OCI-LY7 (cell line): ENCODE measurements at regions of chr11 and their contacts with region 1.

Region 1: DNA sequence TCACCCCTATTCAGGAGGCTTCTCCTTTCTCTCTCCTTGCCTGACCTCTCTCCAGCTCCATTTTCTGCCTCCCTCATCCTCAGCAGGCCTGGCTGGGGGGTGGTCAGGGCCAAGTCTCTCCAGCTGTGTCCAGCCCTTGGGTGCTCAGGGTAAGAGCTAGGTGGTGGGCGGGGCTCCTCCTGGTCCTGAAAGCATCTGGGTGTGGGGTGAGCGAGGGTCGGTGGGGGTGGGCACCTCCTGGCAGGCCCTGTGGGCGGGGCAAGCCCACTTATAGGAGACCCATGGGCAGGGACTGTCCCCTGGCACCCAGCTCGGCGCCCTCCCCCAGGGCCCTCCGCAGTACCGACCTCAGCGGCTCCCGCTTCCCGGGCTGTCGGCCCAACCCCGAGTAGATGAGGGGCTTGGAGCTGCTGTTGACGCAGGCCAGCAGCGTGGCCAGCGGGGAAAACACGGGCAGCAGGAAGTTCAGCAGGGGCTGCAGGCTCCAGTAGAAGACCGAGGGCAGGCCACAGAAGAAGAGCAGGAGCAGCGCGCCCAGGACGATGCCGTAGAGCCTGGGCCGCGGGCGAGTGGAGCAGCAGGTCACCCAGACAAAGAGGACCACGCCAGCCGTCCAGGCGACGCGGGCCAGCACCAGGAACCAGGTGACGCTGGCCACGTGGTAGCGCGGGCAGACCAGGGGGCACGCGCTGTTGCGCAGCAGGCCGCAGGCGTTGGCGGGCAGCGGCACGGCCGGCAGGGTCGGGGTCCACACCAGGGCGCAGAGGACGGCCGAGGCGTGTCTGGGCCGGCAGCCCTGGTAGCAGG is 734 bp downstream of the MRGPRG start:
- DNase-seq: no peak
- H3K4me3 ChIP-seq: no peak overlapping the region
- H3K27ac ChIP-seq: no peak overlapping the region
- H3K4me1 ChIP-seq: no peaks in the 10 kb centered on the region
- CTCF ChIP-seq: no peak

Region 2: GRCh38 chr11:2892215-2893020 is 325.5 kb before region 1 on chr11:
- CTCF ChIA-PET with region 1: no interaction called
- POLR2A ChIA-PET with region 1: no interaction called
- intact Hi-C with region 1: no loop called
- DNase-seq: peak; percentile 71
- H3K4me3 ChIP-seq: peak overlapping the region; percentile 41
- H3K27ac ChIP-seq: peak overlapping the region; percentile 20
- H3K4me1 ChIP-seq: peaks cover 22% of the 10 kb centered on the region
- CTCF ChIP-seq: peak; percentile 87

Region 3: DNA sequence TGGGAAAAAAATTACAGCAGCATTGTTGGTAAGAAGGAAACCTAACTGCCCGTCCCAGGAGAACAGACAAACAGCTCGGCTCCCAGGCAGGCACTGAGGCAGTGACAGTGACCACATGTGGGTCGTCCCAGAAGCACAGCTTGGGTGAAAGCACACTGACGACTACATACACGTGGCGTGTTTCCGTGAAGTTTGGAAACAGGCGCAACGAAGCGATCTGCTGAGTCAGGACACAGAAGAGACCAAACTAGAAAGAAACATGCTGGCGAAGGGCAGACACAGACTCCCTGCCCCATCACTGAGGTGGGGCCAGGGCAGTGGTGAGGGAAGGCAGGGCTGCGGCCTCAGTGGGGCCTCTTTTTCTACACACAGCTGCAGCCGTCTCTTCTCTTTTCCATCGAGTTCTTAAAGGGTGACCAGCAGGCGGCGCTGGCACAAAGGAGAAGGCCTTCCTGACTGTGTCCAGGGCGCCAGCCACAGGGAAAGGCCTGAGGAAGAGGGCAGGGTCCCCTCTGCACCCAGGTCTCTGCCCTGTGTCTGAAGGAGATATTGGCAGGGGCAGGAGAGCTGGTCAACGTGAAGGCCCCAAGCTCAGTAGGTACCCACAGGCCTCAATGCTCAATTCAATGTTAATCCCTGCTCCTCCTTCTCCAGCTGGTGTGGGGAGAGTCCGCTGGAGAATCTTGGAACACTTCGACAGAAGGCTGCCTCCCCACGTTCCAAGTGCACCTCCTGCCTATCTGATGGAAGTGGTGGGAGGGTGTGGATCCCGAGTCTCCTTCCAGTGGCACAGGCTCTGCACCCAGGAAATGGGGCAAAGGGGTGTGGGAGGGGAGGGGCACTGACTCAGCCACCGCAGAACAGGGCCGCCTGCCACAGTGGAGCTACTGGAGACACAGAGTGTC is 180.6 kb before region 1 on chr11:
- CTCF ChIA-PET with region 1: no interaction called
- POLR2A ChIA-PET with region 1: no interaction called
- intact Hi-C with region 1: loop called (anchors 1 kb)
- DNase-seq: peak; percentile 66
- H3K4me3 ChIP-seq: no peak overlapping the region
- H3K27ac ChIP-seq: no peak overlapping the region
- H3K4me1 ChIP-seq: peaks cover 24% of the 10 kb centered on the region
- CTCF ChIP-seq: peak; percentile 85

Region 4: DNA sequence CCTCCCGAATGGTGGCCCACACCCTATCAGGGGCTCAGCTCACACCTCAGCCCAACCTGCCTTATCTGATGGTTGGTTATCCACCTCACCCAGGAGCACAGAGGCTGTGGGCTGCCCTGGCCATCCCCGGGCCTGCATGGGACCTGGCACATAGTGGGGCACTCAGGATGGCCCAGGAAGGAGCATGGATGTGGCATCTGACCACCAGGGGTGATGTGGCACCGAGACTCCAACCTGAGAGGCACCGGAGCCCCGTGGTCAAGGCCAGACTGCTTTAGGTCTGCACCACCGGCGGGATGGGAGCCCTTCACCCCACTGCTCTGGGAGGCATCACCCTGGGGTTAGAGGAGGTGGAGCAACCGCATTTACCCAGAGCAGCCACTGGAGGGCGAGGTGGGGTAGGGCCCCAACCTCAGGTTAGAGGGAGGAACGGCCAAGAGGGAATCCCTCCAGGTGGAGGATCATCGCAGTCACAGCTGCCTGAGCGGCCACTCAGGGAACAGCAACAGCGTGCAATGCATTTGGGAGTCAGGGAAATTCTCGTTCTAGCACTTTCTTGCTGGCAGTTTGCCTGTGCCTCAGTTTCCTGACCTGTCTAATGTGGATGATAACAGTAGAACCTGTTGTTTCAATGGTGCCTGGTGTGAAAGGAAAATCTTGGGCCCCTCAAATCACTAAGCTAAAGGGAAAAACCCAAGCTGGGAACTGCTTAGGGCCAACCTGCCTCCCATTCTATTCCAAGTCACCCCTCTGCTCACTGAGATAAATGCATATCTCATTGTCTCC is 107.8 kb before region 1 on chr11:
- CTCF ChIA-PET with region 1: no interaction called
- POLR2A ChIA-PET with region 1: no interaction called
- intact Hi-C with region 1: loop called (anchors 1 kb)
- DNase-seq: peak; percentile 20
- H3K4me3 ChIP-seq: no peak overlapping the region
- H3K27ac ChIP-seq: no peak overlapping the region
- H3K4me1 ChIP-seq: no peaks in the 10 kb centered on the region
- CTCF ChIP-seq: peak; percentile 67

Region 5: DNA sequence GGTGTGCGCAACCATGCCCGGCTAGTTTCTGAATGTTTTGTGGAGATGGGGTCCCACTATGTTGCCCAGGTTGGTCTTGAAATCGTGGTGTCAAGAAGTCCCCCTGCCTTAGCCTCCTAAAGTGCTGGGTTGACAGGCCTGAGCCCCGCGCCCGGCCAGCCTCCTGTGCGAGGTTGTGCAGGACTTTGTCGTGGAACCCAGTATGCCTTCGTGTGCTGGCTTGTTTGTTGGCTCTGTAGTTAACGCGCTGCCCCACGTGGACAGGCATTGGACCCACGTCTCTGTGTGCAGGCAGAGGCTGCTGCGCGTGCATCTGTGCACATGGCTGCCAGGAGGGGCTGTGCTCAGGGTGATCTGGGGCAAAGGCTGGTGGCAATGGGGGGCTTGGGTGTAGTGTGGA is 195.0 kb after region 1 on chr11:
- CTCF ChIA-PET with region 1: no interaction called
- POLR2A ChIA-PET with region 1: no interaction called
- intact Hi-C with region 1: loop called (anchors 2 kb)
- DNase-seq: no peak
- H3K4me3 ChIP-seq: no peak overlapping the region
- H3K27ac ChIP-seq: no peak overlapping the region
- H3K4me1 ChIP-seq: no peaks in the 10 kb centered on the region
- CTCF ChIP-seq: no peak